MCF 10A (cell line): ENCODE measurements at regions of chr11 and their contacts with region 1.

Region 1: DNA sequence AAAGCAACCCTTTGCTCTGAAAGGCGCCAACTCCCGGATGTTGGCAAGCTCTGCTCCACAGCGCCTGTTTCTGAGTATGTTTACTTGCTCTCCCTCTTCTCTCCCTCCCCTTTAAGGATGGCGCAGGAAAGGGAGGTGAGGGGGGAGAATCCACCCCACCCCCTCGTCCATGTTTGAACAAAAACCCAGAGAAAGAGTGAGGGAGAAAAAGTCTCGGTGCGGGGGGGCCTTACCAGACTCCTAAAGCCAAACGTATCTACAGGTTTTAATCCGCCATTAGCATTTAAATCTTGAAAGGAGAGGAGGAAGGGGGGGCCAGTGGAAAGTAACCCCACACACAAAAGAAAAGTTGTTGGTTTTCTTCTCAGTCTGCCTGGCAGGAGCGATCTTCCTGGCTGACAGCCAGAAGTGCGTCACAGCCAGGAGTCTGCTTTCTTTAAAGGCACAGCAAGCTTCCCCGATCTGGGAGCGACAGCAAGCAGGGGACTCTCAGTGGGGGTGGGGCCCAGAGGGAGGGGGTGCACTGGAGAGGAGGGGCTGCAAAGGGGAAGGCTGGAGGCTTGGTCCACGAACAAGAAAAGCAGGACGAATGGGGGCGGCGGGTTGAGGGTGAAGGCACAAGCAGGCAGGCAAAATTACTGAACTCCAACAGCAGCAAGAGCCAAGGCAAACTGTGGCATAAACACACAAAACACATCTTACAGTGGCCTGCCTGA is 39.5 kb downstream of the NUMA1 start:
- DNase-seq: peak; percentile 91
- H3K4me3 Mint-ChIP-seq: no peak overlapping the region
- H3K27ac Mint-ChIP-seq: no peak overlapping the region
- H3K4me1 Mint-ChIP-seq: peaks cover 26% of the 10 kb centered on the region
- H3K27me3 Mint-ChIP-seq: no peaks in the 10 kb centered on the region
- CTCF ChIP-seq: no peak

Region 2: GRCh38 chr11:71908218-71908617 is 132.7 kb before region 1 on chr11:
- CTCF ChIA-PET with region 1: no interaction called
- POLR2A ChIA-PET with region 1: no interaction called
- intact Hi-C with region 1: no loop called
- DNase-seq: no peak
- H3K4me3 Mint-ChIP-seq: no peak overlapping the region
- H3K27ac Mint-ChIP-seq: no peak overlapping the region
- H3K4me1 Mint-ChIP-seq: no peaks in the 10 kb centered on the region
- H3K27me3 Mint-ChIP-seq: no peaks in the 10 kb centered on the region
- CTCF ChIP-seq: no peak

Region 3: GRCh38 chr11:72080256-72080974 is 39.5 kb after region 1 on chr11 and contains the starts of genes LRRC51 and NUMA1:
- CTCF ChIA-PET with region 1: interaction called, 4 read pairs
- POLR2A ChIA-PET with region 1: interaction called, 282 read pairs
- intact Hi-C with region 1: loop called (anchors 1 kb)
- DNase-seq: peak; percentile 100
- H3K4me3 Mint-ChIP-seq: peak within 1 kb of the TSS; percentile 99
- H3K27ac Mint-ChIP-seq: peak within 1 kb of the TSS; percentile 99
- H3K4me1 Mint-ChIP-seq: peaks cover 48% of the 10 kb centered on the region
- H3K27me3 Mint-ChIP-seq: no peaks in the 10 kb centered on the region
- CTCF ChIP-seq: no peak
- total RNA-seq, gene LRRC51: 9.3 and 9.5 TPM in 2 replicates
- total RNA-seq, gene NUMA1: 109 and 113 TPM in 2 replicates

Region 4: GRCh38 chr11:72091005-72091691 is 50.3 kb after region 1 on chr11:
- CTCF ChIA-PET with region 1: interaction called, 21 read pairs
- POLR2A ChIA-PET with region 1: interaction called, 38 read pairs
- intact Hi-C with region 1: no loop called
- DNase-seq: peak; percentile 69
- H3K4me3 Mint-ChIP-seq: no peak overlapping the region
- H3K27ac Mint-ChIP-seq: peak overlapping the region; percentile 70
- H3K4me1 Mint-ChIP-seq: no peaks in the 10 kb centered on the region
- H3K27me3 Mint-ChIP-seq: no peaks in the 10 kb centered on the region
- CTCF ChIP-seq: peak; percentile 77

Region 5: DNA sequence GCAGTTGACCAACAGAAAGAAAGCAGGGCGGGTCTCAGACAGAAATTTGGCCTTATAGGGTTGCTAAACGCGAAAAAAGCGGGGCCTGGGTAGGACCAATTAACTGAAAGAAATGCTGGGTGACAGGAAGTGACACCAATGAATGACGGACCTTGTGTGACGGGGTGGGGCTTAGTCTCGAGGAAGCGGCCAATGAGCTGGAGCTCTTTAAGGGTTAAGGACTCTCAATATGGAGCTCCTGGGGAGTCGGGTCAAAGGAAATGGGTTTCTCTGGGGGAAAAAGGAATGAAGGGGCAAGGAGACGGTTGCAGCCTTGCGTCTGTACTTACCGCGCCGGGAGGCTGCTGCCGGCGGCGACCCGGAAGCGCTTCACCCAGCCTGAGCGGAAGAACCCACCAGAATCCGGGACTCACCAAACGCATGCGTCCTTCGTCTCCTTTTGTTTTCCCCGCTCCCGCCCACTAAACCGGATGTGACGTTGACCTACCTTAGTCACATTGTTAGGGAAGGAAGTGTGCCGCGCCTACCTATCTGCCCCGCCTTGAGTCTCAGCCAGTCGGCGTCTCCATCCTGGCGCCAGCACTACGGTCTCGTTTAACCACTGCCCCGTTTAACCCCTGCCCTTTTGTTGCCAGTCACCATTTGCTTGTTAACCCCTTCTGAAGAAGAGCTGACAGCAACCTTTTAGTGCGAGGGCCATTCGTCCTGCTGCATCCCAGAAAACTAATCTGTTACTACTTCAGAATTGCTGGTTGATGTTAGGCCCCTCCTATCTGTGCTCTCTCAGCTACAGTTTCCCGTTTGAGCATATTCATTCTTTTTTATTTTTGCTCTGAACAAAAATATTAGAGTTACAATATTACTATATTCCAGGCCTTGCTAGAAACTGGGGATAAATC is 71.7 kb after region 1 on chr11 and contains the start of gene ANAPC15:
- CTCF ChIA-PET with region 1: interaction called, 4 read pairs
- POLR2A ChIA-PET with region 1: interaction called, 18 read pairs
- intact Hi-C with region 1: no loop called
- DNase-seq: peak; percentile 100
- H3K4me3 Mint-ChIP-seq: peak within 1 kb of the TSS; percentile 98
- H3K27ac Mint-ChIP-seq: peak within 1 kb of the TSS; percentile 100
- H3K4me1 Mint-ChIP-seq: peaks cover 20% of the 10 kb centered on the region
- H3K27me3 Mint-ChIP-seq: no peaks in the 10 kb centered on the region
- CTCF ChIP-seq: no peak
- total RNA-seq, gene ANAPC15: 52.2 and 63.6 TPM in 2 replicates

Region 6: DNA sequence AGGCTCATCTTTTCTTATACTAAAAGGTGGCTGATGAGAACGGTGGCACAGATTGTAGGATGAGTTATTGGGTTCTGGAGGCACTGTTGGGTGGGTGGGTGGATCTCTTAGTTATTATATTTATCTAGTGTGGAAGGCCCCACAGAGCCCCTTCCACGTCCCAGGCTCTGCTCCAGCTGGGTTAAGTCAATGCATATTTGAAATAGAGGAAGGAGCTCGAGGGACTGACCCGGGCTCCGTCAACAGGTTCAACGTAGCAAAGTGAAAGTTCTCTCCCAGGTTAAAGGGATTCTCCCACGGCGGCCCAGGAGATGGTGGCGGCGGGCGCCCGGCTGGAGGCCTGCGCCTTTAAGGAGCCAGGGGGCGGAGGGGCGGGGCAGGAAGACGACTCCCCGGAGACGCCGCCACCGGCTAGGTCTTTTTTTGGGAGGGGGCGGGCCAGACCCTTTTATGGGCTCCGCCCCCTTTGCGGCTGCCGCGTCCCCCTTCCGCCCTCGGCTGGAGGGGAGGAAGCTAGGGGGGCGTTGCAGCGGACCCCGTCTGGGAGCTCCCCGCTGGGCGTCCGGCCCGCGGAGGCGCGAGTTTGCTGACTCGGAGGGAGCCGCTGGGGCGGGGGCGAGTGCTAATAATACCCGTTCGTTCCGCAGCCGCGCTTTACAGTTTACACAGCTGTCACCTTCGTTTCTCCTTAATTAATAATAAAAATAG is 182.2 kb after region 1 on chr11:
- CTCF ChIA-PET with region 1: no interaction called
- POLR2A ChIA-PET with region 1: interaction called, 16 read pairs
- intact Hi-C with region 1: no loop called
- DNase-seq: peak; percentile 94
- H3K4me3 Mint-ChIP-seq: peak overlapping the region; percentile 87
- H3K27ac Mint-ChIP-seq: peak overlapping the region; percentile 39
- H3K4me1 Mint-ChIP-seq: peaks cover 8% of the 10 kb centered on the region
- H3K27me3 Mint-ChIP-seq: peaks cover 5% of the 10 kb centered on the region
- CTCF ChIP-seq: no peak